Activated T-helper 1 cell treated with anti-CD3 and anti-CD28 coated beads, Interleukin-12 subunit alpha, Interleukin-12 subunit beta, Interleukin-2, Interleukin-4 antibody, amounts not matched to agents 30 ng/mL and 10 ng/mL and 1 ng/mL, durations not matched to agents 14 hours and 24 hours and 36 hours (primary cell): ENCODE measurements at regions of chr7 and their contacts with region 1.

Region 1: DNA sequence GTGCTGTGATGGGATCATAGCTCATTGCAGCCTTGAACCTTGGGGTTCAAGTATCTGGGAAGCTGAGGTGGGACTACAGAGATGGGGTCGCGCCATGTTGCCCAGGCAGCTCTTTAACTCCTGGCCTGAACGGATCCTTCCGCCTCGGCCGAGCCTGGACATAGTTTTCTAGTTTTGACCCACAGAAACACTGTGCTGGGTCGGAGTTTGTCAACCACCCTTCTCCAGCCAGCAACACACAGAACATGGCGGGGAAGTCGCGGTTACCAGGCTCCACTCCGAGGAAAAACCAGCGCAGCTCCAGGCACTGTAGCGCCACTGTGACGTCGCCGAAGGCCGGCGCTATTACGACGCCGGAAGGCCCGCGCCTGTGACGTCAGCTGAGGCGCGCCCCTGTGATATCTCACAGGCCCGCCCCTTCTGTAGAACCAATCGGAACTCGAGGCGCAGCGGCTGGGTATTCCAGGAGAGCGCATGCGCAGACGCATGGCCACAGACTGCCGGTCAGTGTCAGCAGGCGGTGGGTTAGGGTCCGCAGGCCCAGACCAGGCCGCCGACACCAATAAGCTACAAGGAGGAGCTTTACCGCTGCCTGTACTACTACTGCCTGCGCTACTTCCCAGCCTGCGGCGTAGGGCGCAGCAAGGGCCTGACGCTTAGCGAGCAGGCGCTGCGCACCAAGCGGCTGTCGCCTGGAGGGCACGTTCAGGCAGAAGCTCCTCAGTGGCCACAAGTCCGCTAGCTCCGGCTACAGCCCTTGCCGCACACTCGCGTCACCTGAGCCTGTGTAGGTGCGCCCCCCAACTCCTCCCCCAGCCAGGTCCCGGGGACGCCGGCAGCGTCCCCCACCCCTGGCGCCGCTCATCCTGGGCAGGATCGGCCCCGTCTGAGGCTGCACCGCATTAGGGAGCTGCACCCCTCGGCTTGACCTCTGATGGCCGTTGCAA is 135.2 kb upstream of the KCTD7 start:
- DNase-seq: peak; percentile 96
- H3K4me3 Mint-ChIP-seq: peak overlapping the region; percentile 89
- H3K27ac Mint-ChIP-seq: peak overlapping the region; percentile 89
- H3K4me1 Mint-ChIP-seq: peaks cover 10% of the 10 kb centered on the region
- H3K27me3 Mint-ChIP-seq: no peaks in the 10 kb centered on the region

Region 2: GRCh38 chr7:65373608-65374351 is 1119.7 kb before region 1 on chr7 and contains the start of gene ZNF92:
- intact Hi-C with region 1: loop called (anchors 10 kb)
- DNase-seq: peak; percentile 95
- H3K4me3 Mint-ChIP-seq: peak within 1 kb of the TSS; percentile 98
- H3K27ac Mint-ChIP-seq: peak within 1 kb of the TSS; percentile 93
- H3K4me1 Mint-ChIP-seq: peaks cover 34% of the 10 kb centered on the region
- H3K27me3 Mint-ChIP-seq: no peaks in the 10 kb centered on the region
- total RNA-seq, gene ZNF92: 14.7 and 16.6 TPM in 2 replicates

Region 3: GRCh38 chr7:65981965-65982792 is 511.3 kb before region 1 on chr7 and contains the start of gene GUSB:
- intact Hi-C with region 1: loop called (anchors 2 kb)
- DNase-seq: peak; percentile 88
- H3K4me3 Mint-ChIP-seq: peak within 1 kb of the TSS; percentile 87
- H3K27ac Mint-ChIP-seq: peak within 1 kb of the TSS; percentile 90
- H3K4me1 Mint-ChIP-seq: peaks cover 7% of the 10 kb centered on the region
- H3K27me3 Mint-ChIP-seq: no peaks in the 10 kb centered on the region
- total RNA-seq, gene GUSB: 49.7 and 50.1 TPM in 2 replicates

Region 4: DNA sequence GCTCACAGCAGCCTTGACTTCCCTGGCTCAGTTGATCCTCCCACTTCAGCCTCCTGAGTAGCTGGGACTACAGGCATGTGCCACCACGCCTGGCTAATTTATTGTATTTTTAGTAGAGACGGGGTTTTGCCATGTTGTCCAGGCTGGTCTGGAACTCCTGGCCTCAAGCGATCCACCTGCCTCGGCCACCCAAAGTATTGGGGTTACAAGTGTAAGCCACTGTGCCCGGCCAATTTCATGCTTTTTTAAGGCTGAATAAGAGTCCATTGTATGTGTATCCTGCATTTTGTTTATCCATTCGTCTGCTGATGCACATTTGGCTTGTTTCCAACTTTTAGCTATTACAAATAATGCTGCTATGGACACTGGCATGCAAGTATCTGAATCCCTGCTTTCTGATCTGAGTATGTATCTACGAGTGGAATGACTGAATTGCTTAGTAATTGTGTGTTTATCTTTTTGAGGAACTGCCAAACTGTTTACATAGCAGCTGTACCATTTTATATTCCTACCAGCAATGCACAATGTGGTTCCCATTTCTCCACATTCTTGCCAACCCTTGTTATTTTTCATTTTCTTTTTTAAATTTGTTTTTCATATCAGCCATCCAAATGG is 325.6 kb before region 1 on chr7:
- intact Hi-C with region 1: no loop called
- DNase-seq: no peak
- H3K4me3 Mint-ChIP-seq: no peak overlapping the region
- H3K27ac Mint-ChIP-seq: no peak overlapping the region
- H3K4me1 Mint-ChIP-seq: no peaks in the 10 kb centered on the region
- H3K27me3 Mint-ChIP-seq: no peaks in the 10 kb centered on the region

Region 5: GRCh38 chr7:66413379-66414114 is 80.0 kb before region 1 on chr7:
- intact Hi-C with region 1: loop called (anchors 1 kb)
- DNase-seq: peak; percentile 80
- H3K4me3 Mint-ChIP-seq: peak overlapping the region; percentile 72
- H3K27ac Mint-ChIP-seq: peak overlapping the region; percentile 40
- H3K4me1 Mint-ChIP-seq: peaks cover 7% of the 10 kb centered on the region
- H3K27me3 Mint-ChIP-seq: no peaks in the 10 kb centered on the region

Region 6: DNA sequence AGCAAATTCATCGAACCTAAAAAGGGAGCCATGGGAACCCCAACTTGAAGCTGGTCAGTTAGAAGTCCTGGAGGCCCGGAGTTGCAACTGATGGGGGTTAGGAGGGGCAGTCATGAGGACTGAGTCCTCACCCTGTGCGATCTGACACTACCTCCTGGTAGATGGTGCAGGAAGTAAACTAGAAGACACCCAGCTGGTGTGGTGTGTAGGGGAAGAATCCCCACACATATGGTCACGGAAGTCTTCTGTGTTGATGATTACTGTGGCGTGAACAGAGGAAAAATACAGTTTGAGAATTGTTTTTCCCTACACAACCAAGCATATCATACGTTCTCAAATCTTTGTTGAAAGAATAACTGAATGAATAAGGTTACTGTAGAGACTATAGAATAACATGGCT is 29.4 kb before region 1 on chr7:
- intact Hi-C with region 1: no loop called
- DNase-seq: no peak
- H3K4me3 Mint-ChIP-seq: no peak overlapping the region
- H3K27ac Mint-ChIP-seq: no peak overlapping the region
- H3K4me1 Mint-ChIP-seq: peaks cover 12% of the 10 kb centered on the region
- H3K27me3 Mint-ChIP-seq: no peaks in the 10 kb centered on the region

Region 7: GRCh38 chr7:66628361-66629140 is 135.0 kb after region 1 on chr7 and contains the start of gene KCTD7:
- intact Hi-C with region 1: loop called (anchors 1 kb)
- DNase-seq: peak; percentile 94
- H3K4me3 Mint-ChIP-seq: peak within 1 kb of the TSS; percentile 90
- H3K27ac Mint-ChIP-seq: peak within 1 kb of the TSS; percentile 83
- H3K4me1 Mint-ChIP-seq: peaks cover 39% of the 10 kb centered on the region
- H3K27me3 Mint-ChIP-seq: no peaks in the 10 kb centered on the region
- total RNA-seq, gene KCTD7: 11.0 and 13.8 TPM in 2 replicates

Region 8: DNA sequence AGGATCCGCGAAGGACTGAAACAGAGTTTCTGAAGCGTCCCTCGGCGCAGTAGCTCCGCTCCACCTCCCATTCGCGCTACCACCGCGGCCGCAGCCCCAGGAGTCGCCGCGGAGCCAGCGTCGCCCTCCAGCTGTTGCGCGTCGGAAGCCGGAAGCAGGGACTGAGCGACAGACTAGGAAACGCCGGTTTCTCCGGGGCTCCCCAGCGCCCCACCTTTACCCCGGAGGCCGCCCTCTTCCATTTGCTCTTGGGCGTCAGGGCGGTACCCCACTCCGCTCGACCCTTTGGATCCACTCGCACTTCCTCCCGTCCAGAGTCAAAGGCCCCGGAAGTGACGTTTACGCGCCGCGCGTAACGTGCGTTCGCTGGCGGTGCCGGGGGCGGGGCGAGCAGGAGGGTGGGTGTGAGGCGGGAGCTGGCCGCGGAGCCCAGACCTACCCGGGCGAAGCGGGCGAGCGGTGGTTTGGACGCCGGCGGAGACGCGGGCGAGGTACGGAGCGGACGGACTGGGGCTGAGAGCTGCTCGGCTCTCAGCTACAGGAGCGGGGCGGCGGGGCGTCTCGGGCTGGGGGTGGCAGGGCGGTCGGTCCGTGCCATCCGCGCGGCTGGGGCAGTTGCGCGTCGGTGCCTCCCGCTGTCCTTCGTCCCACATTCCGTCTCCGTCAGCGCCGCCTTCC is 246.9 kb after region 1 on chr7 and contains the start of gene RABGEF1:
- intact Hi-C with region 1: loop called (anchors 1 kb)
- DNase-seq: peak; percentile 98
- H3K4me3 Mint-ChIP-seq: peak within 1 kb of the TSS; percentile 95
- H3K27ac Mint-ChIP-seq: peak within 1 kb of the TSS; percentile 94
- H3K4me1 Mint-ChIP-seq: peaks cover 15% of the 10 kb centered on the region
- H3K27me3 Mint-ChIP-seq: no peaks in the 10 kb centered on the region
- total RNA-seq, gene RABGEF1: 26.7 and 27.8 TPM in 2 replicates